ENCODE measurements at regions of chr5 and their contacts with region 1.

Region 1: GRCh38 chr5:149128023-149128875 is 13.0 kb upstream of the ABLIM3 start:
- DNase-seq: no peak
- H3K4me3 ChIP-seq: no peak overlapping the region
- H3K27ac ChIP-seq: no peak overlapping the region
- H3K27me3 ChIP-seq: no peaks in the 10 kb centered on the region
- CTCF ChIP-seq: peak; percentile 92

Region 2: GRCh38 chr5:149172261-149172660 is 44.0 kb after region 1 on chr5:
- CTCF ChIA-PET with region 1: no interaction called
- POLR2A ChIA-PET with region 1: no interaction called
- DNase-seq: peak; percentile 26
- H3K4me3 ChIP-seq: no peak overlapping the region
- H3K27ac ChIP-seq: peak overlapping the region; percentile 55
- H3K27me3 ChIP-seq: no peaks in the 10 kb centered on the region
- CTCF ChIP-seq: no peak

Region 3: GRCh38 chr5:149228618-149229297 is 100.5 kb after region 1 on chr5:
- CTCF ChIA-PET with region 1: interaction called, 55 read pairs
- POLR2A ChIA-PET with region 1: no interaction called
- DNase-seq: peak; percentile 82
- H3K4me3 ChIP-seq: no peak overlapping the region
- H3K27ac ChIP-seq: no peak overlapping the region
- H3K27me3 ChIP-seq: no peaks in the 10 kb centered on the region
- CTCF ChIP-seq: peak; percentile 90

Region 4: GRCh38 chr5:149238583-149238982 is 110.3 kb after region 1 on chr5:
- CTCF ChIA-PET with region 1: interaction called, 24 read pairs
- POLR2A ChIA-PET with region 1: no interaction called
- DNase-seq: no peak
- H3K4me3 ChIP-seq: no peak overlapping the region
- H3K27ac ChIP-seq: no peak overlapping the region
- H3K27me3 ChIP-seq: no peaks in the 10 kb centered on the region
- CTCF ChIP-seq: 0 out of 2 replicates have a peak, but pooled peaks have one; percentile 18

Region 5: DNA sequence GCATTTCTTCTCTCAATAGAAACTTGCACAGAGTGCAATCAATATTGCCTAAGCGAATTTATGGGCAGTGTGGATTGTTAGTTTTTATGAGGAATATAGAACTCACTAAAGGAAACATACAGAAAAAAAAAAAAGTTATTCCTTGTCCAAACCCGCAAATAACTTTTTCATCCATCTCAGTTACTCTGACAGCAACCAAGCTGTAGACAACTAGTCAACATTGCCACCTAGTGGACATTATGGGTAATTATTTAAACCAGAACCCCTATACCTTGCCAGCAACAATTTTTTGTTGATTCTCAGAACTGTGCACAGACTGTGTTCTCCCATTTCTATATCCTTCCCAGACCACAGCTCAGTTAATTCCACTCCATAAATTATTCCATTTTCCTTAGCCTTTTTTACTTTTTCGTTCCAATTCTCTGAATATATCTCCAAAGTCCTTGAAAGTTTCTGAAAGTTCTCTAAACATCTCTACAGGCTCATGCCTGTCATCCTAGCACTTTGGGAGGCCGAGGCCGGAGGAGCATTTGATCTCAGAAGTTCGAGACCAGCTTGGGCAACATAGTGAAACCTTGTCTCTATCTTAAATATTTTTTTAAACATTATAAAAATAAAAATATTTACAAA is 140.8 kb after region 1 on chr5:
- CTCF ChIA-PET with region 1: interaction called, 24 read pairs
- POLR2A ChIA-PET with region 1: no interaction called
- DNase-seq: no peak
- H3K4me3 ChIP-seq: no peak overlapping the region
- H3K27ac ChIP-seq: no peak overlapping the region
- H3K27me3 ChIP-seq: peaks cover 3% of the 10 kb centered on the region
- CTCF ChIP-seq: peak; percentile 74

Measured in AG04450 (cell line).